Prostate gland (tissue), 2 donors: ENCODE measurements at regions of chr12 and their contacts with region 1.

Region 1: DNA sequence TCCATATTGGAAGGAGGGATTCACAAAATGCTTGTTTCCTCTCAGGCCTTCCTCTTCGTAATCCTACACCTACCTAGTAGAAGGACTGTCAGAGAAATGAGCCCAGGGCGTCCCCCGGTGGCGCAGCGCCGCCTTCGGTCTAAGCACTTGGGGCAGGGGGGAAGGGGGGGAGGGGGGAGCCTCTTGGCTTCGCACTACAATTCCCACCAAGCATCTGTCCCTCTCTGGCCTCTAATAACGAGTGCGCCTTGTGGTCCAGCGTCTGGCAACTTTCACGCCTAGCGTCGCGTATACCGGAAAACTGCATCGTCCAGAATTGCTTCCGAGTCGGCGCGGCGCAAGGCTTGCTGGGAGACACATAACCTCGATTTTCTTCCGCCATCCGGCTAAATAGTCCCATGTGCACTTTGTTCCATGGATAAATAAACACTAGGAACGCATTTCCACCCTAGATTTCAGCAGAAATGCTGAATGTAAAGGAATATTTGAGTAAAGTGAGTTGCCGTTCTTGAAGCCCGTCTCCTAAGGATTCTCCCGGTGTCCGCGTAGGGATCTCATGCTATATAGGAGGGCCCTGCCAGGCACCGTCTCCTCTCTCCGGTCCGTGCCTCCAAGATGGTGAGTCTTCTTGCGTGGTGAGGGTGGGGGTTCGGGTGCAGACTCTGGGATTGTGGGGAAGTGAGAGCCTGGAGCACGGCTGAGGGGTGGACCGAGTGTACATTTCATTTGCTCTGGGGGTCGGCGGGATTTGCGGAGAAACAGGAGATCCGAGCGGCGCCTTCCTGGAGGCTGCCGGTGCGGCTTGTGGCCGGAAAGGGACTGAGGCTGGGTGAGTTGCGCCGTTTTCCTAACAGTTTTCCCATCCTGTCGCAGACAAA is at the start of gene RPS26:
- DNase-seq: peak; percentile 94
- H3K4me3 ChIP-seq: peak within 1 kb of the TSS; percentile 63 to 85
- H3K27ac ChIP-seq: peak within 1 kb of the TSS; percentile 84 to 94
- H3K4me1 ChIP-seq: no peaks in the 10 kb centered on the region
- H3K27me3 ChIP-seq: no peaks in the 10 kb centered on the region
- CTCF ChIP-seq: peak in 2 of 4 experiments; percentile 16 to 39
- POLR2A ChIP-seq: peak; percentile 24
- total RNA-seq, gene RPS26: 284 to 1,659 TPM

Region 2: GRCh38 chr12:55652352-55652751 is 389.4 kb before region 1 on chr12:
- intact Hi-C with region 1: no loop called
- DNase-seq: no peak
- H3K4me3 ChIP-seq: no peak overlapping the region
- H3K27ac ChIP-seq: no peak overlapping the region
- H3K4me1 ChIP-seq: no peaks in the 10 kb centered on the region
- H3K27me3 ChIP-seq: no peaks in the 10 kb centered on the region
- CTCF ChIP-seq: no peak
- POLR2A ChIP-seq: no peak

Region 3: GRCh38 chr12:55738123-55739024 is 303.4 kb before region 1 on chr12:
- intact Hi-C with region 1: loop called (anchors 10 kb)
- DNase-seq: peak; percentile 84
- H3K4me3 ChIP-seq: peak overlapping the region; percentile 26 to 41
- H3K27ac ChIP-seq: peak overlapping the region; percentile 56 to 61
- H3K4me1 ChIP-seq: no peaks in the 10 kb centered on the region
- H3K27me3 ChIP-seq: no peaks in the 10 kb centered on the region
- CTCF ChIP-seq: peak; percentile 72 to 96 (median 92)
- POLR2A ChIP-seq: no peak

Region 4: GRCh38 chr12:55817346-55818139 is 224.2 kb before region 1 on chr12 and contains the starts of genes ORMDL2 and SARNP:
- intact Hi-C with region 1: loop called (anchors 5 kb)
- DNase-seq: peak; percentile 100
- H3K4me3 ChIP-seq: peak within 1 kb of the TSS; percentile 67 to 86
- H3K27ac ChIP-seq: peak within 1 kb of the TSS; percentile 86 to 92
- H3K4me1 ChIP-seq: peaks cover 5% of the 10 kb centered on the region
- H3K27me3 ChIP-seq: no peaks in the 10 kb centered on the region
- CTCF ChIP-seq: no peak
- POLR2A ChIP-seq: peak; percentile 91
- total RNA-seq, gene ORMDL2: 23.1 to 29.3 TPM
- total RNA-seq, gene SARNP: 65.9 to 75.9 TPM

Region 5: GRCh38 chr12:55862286-55862685 is 179.5 kb before region 1 on chr12:
- intact Hi-C with region 1: no loop called
- DNase-seq: no peak
- H3K4me3 ChIP-seq: no peak overlapping the region
- H3K27ac ChIP-seq: no peak overlapping the region
- H3K4me1 ChIP-seq: no peaks in the 10 kb centered on the region
- H3K27me3 ChIP-seq: no peaks in the 10 kb centered on the region
- CTCF ChIP-seq: no peak
- POLR2A ChIP-seq: no peak

Region 6: DNA sequence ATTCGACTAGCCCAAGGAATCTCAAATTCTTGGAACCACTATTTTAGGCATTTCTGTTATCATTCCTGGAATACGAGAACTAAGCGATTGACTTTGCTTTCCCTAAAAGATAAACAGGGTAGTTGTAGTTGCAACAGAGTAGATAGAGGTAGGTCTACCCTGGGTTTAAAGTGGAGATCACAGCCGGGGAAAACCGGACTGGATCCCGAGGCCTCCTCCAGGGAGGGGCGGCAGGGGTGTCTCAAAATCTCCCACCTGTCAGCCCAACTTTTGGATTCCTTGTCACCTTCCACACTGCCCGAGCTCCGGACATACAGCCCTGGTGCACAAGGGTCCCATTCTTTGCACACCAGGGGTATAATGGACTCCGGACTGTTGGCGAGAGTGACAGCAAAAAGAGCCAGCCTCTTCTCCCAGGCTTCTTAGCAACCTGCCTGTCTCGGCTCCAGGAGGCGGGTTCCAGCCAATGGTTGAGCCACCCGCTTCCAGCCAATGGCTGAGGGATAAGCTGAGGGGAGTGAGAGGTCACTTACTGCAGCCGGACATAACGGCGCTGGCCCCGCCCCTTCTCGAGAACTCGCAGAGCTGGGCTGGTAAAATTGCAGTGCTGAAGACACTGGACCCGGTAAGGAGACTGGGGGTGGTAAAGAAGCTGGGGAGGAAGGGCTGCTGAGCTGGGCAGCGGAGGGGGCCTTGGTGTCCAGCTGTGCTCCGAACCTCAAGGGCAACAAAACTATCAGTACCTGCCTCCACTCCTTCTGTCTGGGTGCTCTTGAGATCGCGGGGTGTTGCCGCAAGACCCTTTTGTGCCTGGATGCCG is 44.9 kb before region 1 on chr12 and contains the start of gene SUOX:
- intact Hi-C with region 1: loop called (anchors 5 kb)
- DNase-seq: peak; percentile 98
- H3K4me3 ChIP-seq: peak within 1 kb of the TSS; percentile 51 to 71
- H3K27ac ChIP-seq: peak within 1 kb of the TSS; percentile 81 to 82
- H3K4me1 ChIP-seq: peaks cover 6% of the 10 kb centered on the region
- H3K27me3 ChIP-seq: no peaks in the 10 kb centered on the region
- CTCF ChIP-seq: peak in 1 of 4 experiments; percentile 29
- POLR2A ChIP-seq: peak; percentile 74
- total RNA-seq, gene SUOX: 23.6 to 49.6 TPM

Region 7: DNA sequence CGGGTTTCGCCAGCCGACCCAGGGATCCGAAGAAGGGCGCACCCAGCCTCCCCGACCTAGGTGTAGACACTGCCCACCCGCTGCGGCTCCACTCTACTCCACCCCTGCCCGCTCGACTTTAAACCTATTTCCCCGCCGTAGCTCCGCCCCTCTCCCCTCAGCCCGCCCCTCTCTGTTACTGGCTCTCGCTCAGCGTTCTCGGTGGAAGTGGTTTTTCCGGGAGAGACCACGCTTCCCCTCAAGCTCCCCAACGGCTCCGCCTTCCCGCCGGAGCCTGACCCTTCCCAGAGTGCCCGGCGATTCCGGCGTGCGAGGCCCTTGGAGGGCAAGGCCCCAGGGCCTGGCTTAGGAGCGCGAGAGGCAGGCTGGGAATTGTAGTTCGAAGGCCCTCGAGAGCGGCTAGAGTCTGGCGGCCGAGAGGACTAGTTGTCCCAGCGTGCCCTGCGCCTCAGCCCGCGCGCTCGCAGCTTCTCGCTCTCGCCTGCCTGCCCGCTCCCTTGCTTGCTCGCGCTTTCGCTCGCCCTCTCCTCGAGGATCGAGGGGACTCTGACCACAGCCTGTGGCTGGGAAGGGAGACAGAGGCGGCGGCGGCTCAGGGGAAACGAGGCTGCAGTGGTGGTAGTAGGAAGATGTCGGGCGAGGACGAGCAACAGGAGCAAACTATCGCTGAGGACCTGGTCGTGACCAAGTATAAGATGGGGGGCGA is 62.5 kb after region 1 on chr12 and contains the start of gene PA2G4:
- intact Hi-C with region 1: loop called (anchors 5 kb)
- DNase-seq: peak; percentile 98
- H3K4me3 ChIP-seq: peak within 1 kb of the TSS; percentile 80
- H3K27ac ChIP-seq: peak within 1 kb of the TSS; percentile 86 to 88
- H3K4me1 ChIP-seq: peaks cover 10% of the 10 kb centered on the region
- H3K27me3 ChIP-seq: no peaks in the 10 kb centered on the region
- CTCF ChIP-seq: peak in 2 of 4 experiments; percentile 6 to 21
- POLR2A ChIP-seq: peak; percentile 80
- total RNA-seq, gene PA2G4: 75.0 to 93.3 TPM